Activated CD4-positive, alpha-beta memory T cell treated with anti-CD3 and anti-CD28 coated beads, Interleukin-2, amount 10 ng/mL, durations not matched to agents 7 days and 5 days (primary cell): ENCODE measurements at regions of chr2 and their contacts with region 1.

Region 1: GRCh38 chr2:173027181-173028128 is 48.2 kb upstream of the MAP3K20 start:
- DNase-seq: peak; percentile 77
- H3K4me3 Mint-ChIP-seq: no peak overlapping the region
- H3K27ac Mint-ChIP-seq: no peak overlapping the region
- H3K4me1 Mint-ChIP-seq: no peaks in the 10 kb centered on the region
- H3K27me3 Mint-ChIP-seq: peaks cover 28% of the 10 kb centered on the region

Region 2: DNA sequence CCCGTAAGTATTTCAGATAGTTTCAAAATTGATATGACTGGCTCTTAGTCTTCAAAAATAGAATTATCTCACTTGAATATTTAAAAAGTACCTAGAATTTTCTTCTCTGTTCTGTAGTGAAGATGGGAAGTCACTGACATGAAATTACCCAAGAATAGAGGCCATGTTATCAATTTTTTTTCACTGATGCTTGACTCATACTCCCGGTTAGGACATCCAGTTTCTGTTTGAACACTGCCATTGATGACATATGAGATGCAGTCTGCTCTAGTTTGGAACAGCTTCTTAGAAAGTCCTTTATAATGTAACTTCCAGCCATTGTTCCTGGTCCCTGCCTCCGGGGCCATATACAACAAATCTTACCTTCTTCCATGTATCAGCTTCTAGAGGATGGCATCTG is 74.2 kb after region 1 on chr2:
- CTCF ChIA-PET with region 1: no interaction called
- POLR2A ChIA-PET with region 1: no interaction called
- DNase-seq: no peak
- H3K4me3 Mint-ChIP-seq: no peak overlapping the region
- H3K27ac Mint-ChIP-seq: no peak overlapping the region
- H3K4me1 Mint-ChIP-seq: peaks cover 13% of the 10 kb centered on the region
- H3K27me3 Mint-ChIP-seq: peaks cover 5% of the 10 kb centered on the region

Region 3: DNA sequence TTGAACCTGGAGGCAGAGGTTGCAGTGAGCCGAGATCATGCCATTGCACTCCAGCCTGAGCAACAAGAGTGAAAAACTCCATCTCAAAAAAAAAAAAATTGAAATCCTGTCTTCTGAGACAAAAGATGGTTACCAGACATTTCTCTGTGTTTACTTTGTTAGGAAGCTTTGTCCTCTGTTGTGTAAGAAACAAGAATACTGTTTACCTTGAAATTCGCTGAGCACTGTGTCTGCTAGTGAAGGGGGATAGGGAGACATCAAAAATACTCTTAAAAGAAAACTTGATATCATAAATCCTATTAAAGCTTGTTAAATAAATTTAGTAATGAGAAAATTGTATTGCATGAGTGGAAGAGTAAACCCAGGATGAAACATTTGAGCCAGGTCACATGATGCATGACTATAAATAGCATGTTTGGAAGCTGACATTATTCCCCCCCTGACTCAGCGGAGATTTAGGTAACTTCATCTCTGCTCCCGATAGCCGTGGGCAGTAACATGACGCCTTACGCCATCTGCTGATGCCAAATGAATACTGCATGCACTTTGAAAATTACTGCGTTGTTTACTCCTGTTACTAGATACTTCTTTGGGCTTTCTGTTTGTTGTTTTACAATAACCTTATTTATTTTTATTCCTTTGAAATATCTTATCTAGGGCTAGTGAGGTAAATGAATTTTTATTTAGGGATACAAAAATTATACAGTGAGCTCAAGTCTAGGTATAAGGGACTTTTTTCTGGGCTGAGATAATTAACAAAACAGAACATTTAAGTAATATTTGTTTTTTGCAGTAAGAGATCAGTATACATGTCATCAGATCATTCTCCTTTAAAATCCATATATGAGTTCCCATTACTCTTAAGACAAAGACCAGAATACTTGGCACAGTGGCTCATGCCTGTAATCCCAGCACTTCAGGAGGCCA is 183.1 kb after region 1 on chr2:
- CTCF ChIA-PET with region 1: interaction called, 168 read pairs
- POLR2A ChIA-PET with region 1: no interaction called
- DNase-seq: peak; percentile 51
- H3K4me3 Mint-ChIP-seq: no peak overlapping the region
- H3K27ac Mint-ChIP-seq: no peak overlapping the region
- H3K4me1 Mint-ChIP-seq: no peaks in the 10 kb centered on the region
- H3K27me3 Mint-ChIP-seq: no peaks in the 10 kb centered on the region

Region 4: DNA sequence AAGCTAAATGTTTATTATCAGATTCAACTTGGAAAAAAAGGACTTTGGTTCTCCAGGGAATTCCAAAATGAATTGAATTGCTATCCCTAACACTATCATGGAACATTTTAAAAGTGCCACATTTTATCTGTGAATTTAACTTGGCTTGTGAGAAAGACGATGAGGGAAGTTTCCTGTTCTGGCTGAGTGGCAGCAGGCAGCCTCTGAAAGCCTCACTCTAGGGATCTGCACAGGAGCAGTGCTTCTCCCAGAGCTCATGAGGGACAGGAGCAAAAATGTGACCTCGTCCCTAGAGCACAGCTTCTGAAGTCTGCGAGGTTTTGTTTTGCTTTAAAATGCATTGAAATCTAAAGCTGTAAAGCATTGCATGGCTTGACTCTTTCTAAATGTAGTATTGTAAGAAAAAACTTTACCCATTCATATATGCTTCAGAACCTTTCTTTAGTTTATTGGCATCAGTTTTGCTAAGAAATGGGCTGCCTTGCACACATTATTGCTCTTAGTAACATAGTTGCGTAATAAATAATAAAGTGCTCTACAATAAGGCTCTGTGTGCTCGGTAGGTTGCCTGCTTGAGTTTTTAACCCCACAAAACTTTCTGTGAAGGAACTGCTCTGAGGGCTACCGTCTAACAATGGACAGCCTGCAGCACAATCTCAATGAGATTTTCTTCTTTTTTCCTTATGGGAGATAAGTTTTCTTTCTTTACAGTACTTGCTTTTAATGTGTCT is 191.0 kb after region 1 on chr2:
- CTCF ChIA-PET with region 1: interaction called, 168 read pairs
- POLR2A ChIA-PET with region 1: interaction called, 3 read pairs
- DNase-seq: no peak
- H3K4me3 Mint-ChIP-seq: no peak overlapping the region
- H3K27ac Mint-ChIP-seq: no peak overlapping the region
- H3K4me1 Mint-ChIP-seq: peaks cover 5% of the 10 kb centered on the region
- H3K27me3 Mint-ChIP-seq: peaks cover 9% of the 10 kb centered on the region

Region 5: DNA sequence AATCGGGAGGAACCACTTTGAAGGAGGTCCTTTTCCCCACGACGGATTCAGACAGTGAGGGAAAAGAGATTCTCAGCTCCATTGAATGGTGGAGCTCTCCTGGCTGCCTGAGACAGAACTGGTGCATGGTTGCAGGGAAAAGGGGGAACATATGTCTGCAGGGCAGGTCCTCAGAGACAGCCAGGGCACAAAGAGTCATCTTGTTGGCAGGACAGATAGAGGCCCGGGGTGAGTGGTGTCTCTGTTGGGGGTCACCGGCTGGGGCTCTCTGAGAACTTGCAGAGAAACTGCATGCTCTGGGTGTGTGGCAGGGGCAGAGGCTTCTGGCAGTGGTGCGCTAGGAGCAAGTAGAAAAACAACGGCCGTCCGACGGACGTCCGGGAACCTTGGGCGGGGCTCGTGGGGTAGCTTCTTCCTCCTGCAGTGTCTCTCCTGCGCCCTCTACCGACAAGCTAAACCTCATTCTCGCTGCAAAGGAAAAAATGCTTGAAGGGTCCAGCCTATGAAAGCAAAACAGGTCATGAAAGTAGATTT is 421.6 kb after region 1 on chr2:
- CTCF ChIA-PET with region 1: interaction called, 21 read pairs
- POLR2A ChIA-PET with region 1: no interaction called
- DNase-seq: peak; percentile 79
- H3K4me3 Mint-ChIP-seq: peak overlapping the region; percentile 50
- H3K27ac Mint-ChIP-seq: peak overlapping the region; percentile 56
- H3K4me1 Mint-ChIP-seq: peaks cover 10% of the 10 kb centered on the region
- H3K27me3 Mint-ChIP-seq: peaks cover 18% of the 10 kb centered on the region